Activated CD4-positive, alpha-beta T cell treated with anti-CD3 and anti-CD28 coated beads for 36 hours (primary cell): ENCODE measurements at regions of chr14 and their contacts with region 1.

Region 1: GRCh38 chr14:50231475-50232275 is at the start of gene SOS2:
- DNase-seq: peak; percentile 90
- ATAC-seq: peak; percentile 78
- H3K4me3 Mint-ChIP-seq: peak within 1 kb of the TSS; percentile 78
- H3K27ac Mint-ChIP-seq: peak within 1 kb of the TSS; percentile 85
- H3K4me1 Mint-ChIP-seq: peaks cover 39% of the 10 kb centered on the region
- H3K27me3 Mint-ChIP-seq: no peaks in the 10 kb centered on the region
- total RNA-seq, gene SOS2: 20.2 to 20.9 TPM

Region 2: GRCh38 chr14:49585803-49586672 is 645.6 kb before region 1 on chr14 and contains the start of gene RPS29:
- CTCF ChIA-PET with region 1: no interaction called
- POLR2A ChIA-PET with region 1: no interaction called
- intact Hi-C with region 1: loop called in 1 of 2 experiments (anchors 1 kb)
- DNase-seq: peak; percentile 99
- ATAC-seq: peak; percentile 84
- H3K4me3 Mint-ChIP-seq: peak within 1 kb of the TSS; percentile 92
- H3K27ac Mint-ChIP-seq: peak within 1 kb of the TSS; percentile 96
- H3K4me1 Mint-ChIP-seq: peaks cover 40% of the 10 kb centered on the region
- H3K27me3 Mint-ChIP-seq: no peaks in the 10 kb centered on the region
- total RNA-seq, gene RPS29: 481 to 1,987 TPM

Region 3: DNA sequence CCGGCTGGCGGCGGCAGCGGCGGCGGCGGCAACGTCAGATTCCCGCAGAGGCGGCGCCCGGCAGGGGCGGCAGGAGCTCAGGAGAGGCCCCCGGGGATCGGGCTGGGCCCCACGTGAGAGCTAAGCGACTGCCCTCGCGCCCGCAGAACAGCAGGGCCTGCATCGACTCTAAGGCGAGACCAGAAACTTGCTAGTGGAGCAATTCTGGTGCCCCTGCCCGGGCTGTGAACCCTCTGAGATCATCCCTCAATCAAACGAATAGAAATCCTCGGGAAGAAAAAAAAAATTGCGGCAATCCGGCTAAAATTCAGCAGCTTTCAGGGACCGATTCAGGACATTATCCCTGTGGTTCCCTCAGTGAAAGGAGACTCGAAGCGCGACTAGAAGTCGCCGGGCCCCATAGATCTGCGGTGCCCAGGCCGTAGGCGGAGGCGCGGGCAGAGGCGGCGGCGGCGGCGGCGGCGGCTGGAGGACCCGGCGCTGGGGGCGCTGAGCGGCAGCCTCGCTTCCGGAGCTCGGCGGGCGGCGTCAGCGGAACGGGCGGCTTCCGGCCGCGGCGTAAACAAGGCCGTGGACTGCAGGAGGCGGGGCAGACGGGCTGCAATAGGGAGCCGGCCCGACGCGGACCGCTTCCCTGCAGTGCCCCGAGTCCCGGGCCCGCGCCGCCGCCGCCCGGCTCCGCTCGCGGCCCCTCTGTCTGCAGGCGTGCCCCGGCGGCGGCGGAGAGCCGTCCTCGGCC is 463.9 kb before region 1 on chr14 and contains the start of gene KLHDC2:
- CTCF ChIA-PET with region 1: no interaction called
- POLR2A ChIA-PET with region 1: no interaction called
- intact Hi-C with region 1: loop called in 1 of 2 experiments (anchors 2 kb)
- DNase-seq: peak; percentile 94
- ATAC-seq: peak; percentile 79
- H3K4me3 Mint-ChIP-seq: peak within 1 kb of the TSS; percentile 96
- H3K27ac Mint-ChIP-seq: peak within 1 kb of the TSS; percentile 99
- H3K4me1 Mint-ChIP-seq: peaks cover 30% of the 10 kb centered on the region
- H3K27me3 Mint-ChIP-seq: no peaks in the 10 kb centered on the region
- total RNA-seq, gene KLHDC2: 16.0 to 22.4 TPM

Region 4: DNA sequence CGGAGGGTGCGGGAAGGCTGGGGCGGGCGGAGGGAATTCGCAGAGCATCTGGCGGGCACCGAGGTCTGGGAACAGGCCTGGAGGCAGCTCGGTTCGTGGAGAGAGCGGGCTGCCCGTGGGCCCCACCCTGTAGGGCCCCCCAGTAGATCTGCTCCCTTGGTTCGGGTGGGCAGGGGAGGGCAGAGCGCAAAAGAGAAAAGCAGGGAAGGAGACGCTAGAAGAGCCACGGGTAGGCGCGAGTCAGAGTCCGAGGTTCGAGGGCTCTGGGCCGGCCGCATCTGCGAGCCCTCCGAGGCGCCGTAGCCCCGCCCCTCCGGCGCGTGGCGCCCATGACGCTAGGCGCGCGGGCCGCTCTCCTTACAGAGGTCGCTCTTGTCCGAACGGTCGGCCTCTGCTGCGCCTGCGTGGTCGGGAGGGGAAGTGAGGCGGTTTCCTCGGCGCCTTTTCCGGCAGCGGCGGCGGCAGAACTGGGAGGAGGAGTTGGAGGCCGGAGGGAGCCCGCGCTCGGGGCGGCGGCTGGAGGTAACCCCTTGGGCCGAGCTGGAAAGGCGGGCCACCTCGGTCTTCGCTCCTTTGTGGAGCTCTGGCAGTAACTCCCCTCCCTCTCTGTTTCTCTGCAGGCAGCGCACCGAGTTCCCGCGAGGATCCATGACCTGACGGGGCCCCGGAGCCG is 338.9 kb before region 1 on chr14 and contains the start of gene ARF6:
- CTCF ChIA-PET with region 1: no interaction called
- POLR2A ChIA-PET with region 1: no interaction called
- intact Hi-C with region 1: loop called in 1 of 2 experiments (anchors 1 kb)
- DNase-seq: peak; percentile 98
- ATAC-seq: peak; percentile 76
- H3K4me3 Mint-ChIP-seq: peak within 1 kb of the TSS; percentile 91
- H3K27ac Mint-ChIP-seq: peak within 1 kb of the TSS; percentile 98
- H3K4me1 Mint-ChIP-seq: peaks cover 16% of the 10 kb centered on the region
- H3K27me3 Mint-ChIP-seq: no peaks in the 10 kb centered on the region
- total RNA-seq, gene ARF6: 172 to 181 TPM

Region 5: DNA sequence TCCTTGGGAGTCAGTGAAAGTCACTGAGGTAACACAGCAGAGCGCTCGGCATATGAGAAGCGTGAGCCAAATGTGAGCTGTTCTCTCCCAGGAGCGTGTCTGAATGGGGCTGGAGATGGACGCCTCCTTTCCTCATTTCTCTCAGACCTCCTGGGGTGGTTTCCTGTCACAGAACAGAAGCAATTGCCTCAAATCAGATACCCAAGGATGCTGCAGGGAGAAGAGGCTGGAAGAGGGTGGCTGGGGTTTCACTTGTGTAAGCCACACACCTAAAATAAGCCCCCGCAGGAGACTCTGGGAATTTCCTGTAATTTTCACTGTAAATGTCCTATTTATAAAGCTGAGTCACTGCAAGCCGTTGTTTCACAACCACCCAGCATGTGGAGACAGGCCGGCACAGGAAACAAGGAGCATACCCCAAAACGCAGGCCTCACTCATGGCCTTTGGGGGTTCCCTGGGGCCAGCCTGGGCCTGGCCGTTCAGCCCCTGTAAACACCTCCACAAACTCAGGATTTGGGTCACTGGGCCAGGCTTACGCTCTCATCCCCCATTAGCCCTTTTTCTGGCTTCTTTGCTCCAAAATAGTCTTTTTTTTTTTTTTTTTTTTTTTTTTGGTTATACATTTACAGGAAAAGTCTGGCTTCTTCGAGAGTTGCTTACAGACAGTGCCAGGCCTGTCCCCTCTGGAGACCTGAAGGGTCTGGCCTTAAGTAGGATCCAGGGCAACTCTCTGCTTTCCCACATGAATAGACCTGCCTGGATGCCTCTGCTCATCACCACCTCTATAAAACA is 170.6 kb before region 1 on chr14:
- CTCF ChIA-PET with region 1: no interaction called
- POLR2A ChIA-PET with region 1: no interaction called
- intact Hi-C with region 1: loop called in 1 of 2 experiments (anchors 1 kb)
- DNase-seq: peak; percentile 65
- ATAC-seq: peak; percentile 6
- H3K4me3 Mint-ChIP-seq: peak overlapping the region; percentile 90
- H3K27ac Mint-ChIP-seq: peak overlapping the region; percentile 100
- H3K4me1 Mint-ChIP-seq: peaks cover 84% of the 10 kb centered on the region
- H3K27me3 Mint-ChIP-seq: no peaks in the 10 kb centered on the region

Region 6: DNA sequence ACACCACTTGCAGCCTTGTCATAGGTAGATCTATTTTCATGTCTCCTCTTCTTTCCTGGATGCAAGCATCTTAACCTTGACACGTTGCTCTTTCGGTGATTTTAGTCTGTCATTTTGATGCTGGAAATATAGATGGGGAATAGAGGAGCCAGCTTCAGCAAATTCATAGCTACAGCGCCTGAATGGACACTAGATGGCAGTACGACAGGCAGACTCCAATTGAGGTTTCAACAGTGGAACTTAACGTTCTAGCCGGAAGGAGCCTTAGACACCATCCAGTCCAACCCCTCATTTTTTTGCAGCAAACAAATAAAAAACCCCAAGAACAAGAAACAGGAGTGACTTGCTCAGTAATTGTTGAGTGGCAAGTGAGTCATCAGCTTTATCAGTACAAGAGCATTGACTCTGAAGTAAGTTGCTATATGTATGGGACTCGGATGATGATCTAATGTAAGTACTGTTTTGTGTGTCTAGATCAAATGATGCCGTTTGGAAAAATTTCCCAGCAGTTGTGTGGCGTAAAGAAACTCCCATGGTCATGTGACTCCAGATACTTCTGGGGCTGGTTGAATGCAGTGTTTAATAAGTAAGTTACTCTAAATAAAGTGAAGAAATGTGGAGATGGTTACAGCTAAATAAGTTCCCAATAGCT is 89.5 kb after region 1 on chr14:
- CTCF ChIA-PET with region 1: no interaction called
- POLR2A ChIA-PET with region 1: no interaction called
- intact Hi-C with region 1: loop called (anchors 1 to 2 kb)
- DNase-seq: peak; percentile 77
- ATAC-seq: peak; percentile 98
- H3K4me3 Mint-ChIP-seq: no peak overlapping the region
- H3K27ac Mint-ChIP-seq: no peak overlapping the region
- H3K4me1 Mint-ChIP-seq: peaks cover 31% of the 10 kb centered on the region
- H3K27me3 Mint-ChIP-seq: no peaks in the 10 kb centered on the region

Region 7: GRCh38 chr14:50520947-50521815 is 289.5 kb after region 1 on chr14:
- CTCF ChIA-PET with region 1: no interaction called
- POLR2A ChIA-PET with region 1: no interaction called
- intact Hi-C with region 1: loop called (anchors 2 to 5 kb)
- DNase-seq: peak; percentile 84
- ATAC-seq: peak; percentile 81
- H3K4me3 Mint-ChIP-seq: peak overlapping the region; percentile 55
- H3K27ac Mint-ChIP-seq: peak overlapping the region; percentile 94
- H3K4me1 Mint-ChIP-seq: peaks cover 56% of the 10 kb centered on the region
- H3K27me3 Mint-ChIP-seq: no peaks in the 10 kb centered on the region